ENCODE measurements at regions of chr7 and their contacts with region 1.

Region 1: DNA sequence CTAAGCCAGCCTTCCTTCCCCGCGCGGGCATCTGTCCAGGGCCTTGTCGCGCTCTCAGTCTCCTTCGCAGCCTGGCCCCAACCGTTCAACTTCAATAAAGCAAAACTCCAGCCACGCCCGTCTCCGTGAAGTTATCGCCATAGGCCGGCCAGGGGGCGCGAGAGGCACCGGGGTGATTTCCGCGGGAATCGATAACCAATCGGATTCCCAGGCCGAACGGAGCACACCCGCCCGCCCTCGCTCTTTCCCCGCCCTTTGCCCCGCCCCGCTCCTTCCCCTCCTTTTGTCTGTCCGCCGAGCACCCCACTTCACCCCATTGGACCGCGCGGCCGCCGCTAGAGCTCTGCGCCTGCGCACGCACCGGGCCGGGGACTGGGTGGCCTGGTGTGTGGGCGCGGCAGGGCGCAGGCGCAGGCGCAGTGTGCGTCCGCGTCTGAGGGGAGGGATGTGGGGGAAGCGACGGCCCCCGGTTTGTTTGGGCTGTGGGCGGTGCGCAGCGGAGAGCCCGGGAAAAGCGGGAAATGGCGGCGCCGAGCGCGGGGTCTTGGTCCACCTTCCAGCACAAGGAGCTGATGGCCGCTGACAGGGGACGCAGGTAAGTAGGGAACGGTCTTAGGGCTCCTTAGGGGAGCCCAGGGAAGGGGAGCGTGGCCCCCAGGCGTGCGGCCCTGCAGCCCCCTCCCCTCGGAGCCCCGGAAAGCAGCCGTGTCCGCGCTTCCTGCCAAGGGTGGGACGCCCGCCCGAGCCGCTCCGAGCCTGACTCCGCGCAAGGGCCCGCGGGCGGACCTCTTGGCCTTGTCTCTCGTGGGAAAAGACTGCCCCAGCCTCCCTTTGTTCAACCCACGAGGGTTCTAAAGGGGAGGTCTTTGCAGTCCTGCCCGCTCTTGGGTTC is at the start of gene CASP2:
- H3K4me3 ChIP-seq: peak within 1 kb of the TSS; percentile 92
- H3K27ac ChIP-seq: peak within 1 kb of the TSS; percentile 72
- H3K4me1 ChIP-seq: no peaks in the 10 kb centered on the region
- CTCF ChIP-seq: peak; percentile 78; the same call in 1 of the 2 replicates

Region 2: DNA sequence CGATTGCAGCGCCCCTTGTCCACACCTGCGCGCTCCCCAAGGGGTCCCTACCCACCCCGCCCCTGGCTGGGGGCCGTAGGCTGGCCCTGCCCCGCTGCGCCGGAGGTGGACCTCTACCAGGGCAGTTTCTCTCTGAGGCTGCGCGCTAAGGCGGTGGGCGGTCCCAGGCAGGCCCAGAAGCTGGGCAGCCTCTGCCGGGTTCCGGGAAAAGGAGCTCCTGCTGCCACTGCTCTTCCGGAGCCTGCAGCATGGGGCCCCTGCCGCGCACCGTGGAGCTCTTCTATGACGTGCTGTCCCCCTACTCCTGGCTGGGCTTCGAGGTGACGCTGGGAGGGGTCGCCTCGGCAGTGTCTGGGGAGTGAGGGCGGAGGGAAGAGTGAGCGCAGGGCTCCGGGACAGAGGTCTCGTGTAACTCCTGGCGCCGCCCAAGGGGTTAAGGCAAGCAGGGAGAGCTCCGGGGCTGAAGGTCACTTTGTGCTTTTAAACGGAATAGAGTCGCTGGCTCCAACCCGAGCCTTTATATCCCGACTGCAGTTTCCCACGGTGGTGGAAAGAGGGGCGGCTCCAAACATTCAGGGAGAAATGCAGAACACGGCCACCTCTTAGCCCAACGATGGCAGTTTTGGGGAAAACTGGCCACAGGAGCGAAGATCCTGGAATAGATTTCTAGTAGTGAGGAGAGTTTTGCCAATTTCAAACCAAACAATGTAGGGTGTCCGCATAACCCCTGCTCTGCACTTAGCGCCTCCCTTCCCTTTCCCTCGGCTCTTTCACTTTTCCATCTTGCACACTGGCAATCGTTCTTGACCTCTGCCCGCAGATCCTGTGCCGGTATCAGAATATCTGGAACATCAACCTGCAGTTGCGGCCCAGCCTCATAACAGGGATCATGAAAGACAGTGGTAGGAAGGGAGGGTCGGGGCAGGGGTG is 24.6 kb before region 1 on chr7 and contains the start of gene GSTK1:
- CTCF ChIA-PET with region 1: no interaction called
- POLR2A ChIA-PET with region 1: interaction called, 17 read pairs
- H3K4me3 ChIP-seq: peak within 1 kb of the TSS; percentile 78
- H3K27ac ChIP-seq: peak within 1 kb of the TSS; percentile 26; the same call in 1 of the 2 replicates
- H3K4me1 ChIP-seq: no peaks in the 10 kb centered on the region
- CTCF ChIP-seq: no peak

Region 3: GRCh38 chr7:143299840-143300239 is 11.7 kb after region 1 on chr7:
- CTCF ChIA-PET with region 1: interaction called, 15 read pairs
- POLR2A ChIA-PET with region 1: interaction called, 10 read pairs
- H3K4me3 ChIP-seq: no peak overlapping the region
- H3K27ac ChIP-seq: no peak overlapping the region
- H3K4me1 ChIP-seq: no peaks in the 10 kb centered on the region
- CTCF ChIP-seq: peak; percentile 20; the same call in 1 of the 2 replicates

Region 4: GRCh38 chr7:143305423-143306070 is 17.4 kb after region 1 on chr7:
- CTCF ChIA-PET with region 1: interaction called, 15 read pairs
- POLR2A ChIA-PET with region 1: interaction called, 4 read pairs
- H3K4me3 ChIP-seq: no peak overlapping the region
- H3K27ac ChIP-seq: no peak overlapping the region
- H3K4me1 ChIP-seq: no peaks in the 10 kb centered on the region
- CTCF ChIP-seq: peak; percentile 63

Region 5: DNA sequence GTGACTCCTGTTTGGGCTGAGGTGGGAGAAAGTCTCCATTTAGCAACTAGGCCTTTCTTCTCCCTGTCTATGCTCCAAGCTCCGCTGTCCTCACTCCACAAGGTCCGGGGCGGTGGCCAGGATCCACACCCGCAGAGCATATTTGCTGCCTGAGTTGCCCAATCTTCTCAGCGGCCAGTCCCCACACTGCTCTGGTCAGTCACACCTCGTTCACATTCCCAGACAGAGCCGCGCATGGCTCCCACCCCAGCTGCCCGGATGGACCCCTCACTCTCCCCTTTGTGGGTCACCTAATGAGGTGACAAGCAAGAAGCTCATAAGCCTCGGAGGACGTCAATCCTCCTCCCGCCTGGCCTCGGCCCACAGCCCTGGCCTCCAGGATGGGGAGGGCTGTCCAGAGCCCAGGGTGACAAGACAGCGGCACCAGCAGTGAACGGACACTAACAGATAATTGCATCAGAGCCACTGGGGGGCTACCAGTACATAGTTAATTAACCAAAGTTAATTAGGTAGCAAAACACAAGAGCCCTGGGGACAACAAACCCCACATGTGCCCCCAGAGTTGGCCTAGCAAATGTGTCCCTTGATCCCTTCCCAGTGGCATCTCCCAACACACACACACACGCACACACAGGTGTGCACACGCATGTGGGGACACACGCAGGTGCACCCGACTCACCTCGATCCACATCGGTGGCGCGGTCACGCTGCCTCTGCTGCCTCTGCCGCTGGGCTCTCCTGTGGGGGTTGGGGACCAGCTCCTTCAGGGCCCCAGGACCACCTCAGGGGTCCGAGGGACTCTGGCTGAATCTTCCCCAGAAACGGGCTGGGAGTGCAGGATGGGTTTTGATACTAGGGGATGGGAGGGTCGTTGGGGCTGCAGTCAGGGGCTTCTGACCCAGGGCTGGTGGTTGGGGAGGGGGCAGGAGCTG is 108.7 kb after region 1 on chr7:
- CTCF ChIA-PET with region 1: no interaction called
- POLR2A ChIA-PET with region 1: interaction called, 11 read pairs
- H3K4me3 ChIP-seq: no peak overlapping the region
- H3K27ac ChIP-seq: no peak overlapping the region
- H3K4me1 ChIP-seq: no peaks in the 10 kb centered on the region
- CTCF ChIP-seq: no peak